WTC11 (cell line): ENCODE measurements at regions of chr20 and their contacts with region 1.

Region 1: DNA sequence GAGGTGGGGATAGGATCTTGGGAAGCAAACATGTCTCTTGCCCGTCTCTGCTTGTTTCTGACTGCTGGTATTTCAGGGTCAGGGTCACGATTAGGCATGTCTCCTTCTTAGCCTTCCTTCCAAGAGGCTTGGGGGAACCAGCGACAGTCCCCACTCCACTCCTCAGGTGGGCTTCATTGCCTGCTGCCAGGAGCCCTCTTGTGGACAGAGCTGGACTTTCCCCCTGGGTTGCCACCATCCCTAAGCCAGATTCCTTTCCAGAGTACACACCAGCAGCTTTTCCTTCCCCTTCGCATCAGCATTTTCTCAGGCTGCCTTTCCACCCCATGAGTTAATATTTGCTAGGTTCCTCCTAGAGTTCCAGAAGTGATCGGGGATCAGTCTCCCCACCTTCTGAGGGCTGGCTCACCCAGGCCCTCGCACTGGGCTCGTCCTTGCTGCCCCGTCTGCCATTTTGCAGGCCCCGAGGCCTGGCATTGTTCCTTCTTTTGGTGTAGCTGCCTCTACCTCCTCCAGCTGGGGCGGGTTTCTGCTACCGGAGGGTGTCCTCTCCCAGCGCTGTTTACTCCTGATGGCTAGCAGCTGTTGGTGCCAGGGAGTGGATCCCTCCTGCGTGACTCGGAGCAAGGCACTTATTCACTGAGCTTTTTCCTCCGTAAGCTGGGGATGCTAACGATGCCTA is 8.8 kb upstream of the C20orf144 start:
- DNase-seq: peak; percentile 82
- ATAC-seq: peak; percentile 85
- H3K4me3 Mint-ChIP-seq: no peak overlapping the region
- H3K27ac Mint-ChIP-seq: peak overlapping the region; percentile 48; the same call in 1 of the 2 replicates
- H3K4me1 Mint-ChIP-seq: peaks cover 31% of the 10 kb centered on the region
- H3K27me3 Mint-ChIP-seq: no peaks in the 10 kb centered on the region
- CTCF ChIP-seq: peak; percentile 65

Region 2: DNA sequence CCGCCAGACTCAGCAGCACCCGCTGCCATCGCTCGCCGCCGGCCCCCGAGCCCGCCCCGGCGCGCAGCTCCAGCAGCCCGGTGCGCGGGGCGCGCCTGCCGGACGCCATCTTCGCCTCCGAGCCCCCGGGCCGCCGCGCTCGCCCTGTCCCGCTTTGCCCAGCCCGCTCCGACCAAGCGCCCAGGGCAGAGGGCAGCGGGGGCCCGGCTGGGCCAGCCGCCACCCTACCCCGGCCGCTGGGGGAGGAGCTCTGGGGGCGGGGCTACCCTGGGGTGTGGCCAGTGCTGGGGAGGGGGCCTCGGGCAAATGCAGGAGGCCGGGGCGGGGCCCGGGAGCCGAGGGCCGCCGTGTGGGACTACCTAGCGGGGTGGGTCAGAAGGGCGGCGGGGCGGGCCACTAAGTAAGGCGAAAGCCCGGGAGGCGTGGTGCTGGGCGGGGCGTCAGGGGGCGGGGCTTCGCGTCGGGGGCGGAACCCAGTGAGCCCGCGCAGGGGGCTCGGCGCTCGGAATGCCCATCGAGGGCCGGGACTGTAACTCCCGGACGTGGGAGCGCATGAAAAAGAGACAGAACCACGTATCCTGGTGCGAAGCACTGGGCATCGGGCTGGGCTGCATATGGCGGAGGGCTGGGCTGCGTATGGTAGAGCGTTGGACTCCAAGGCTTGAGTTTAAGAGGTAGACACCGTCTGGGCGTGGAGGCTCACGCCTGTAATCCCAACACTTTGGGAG is 209.7 kb before region 1 on chr20 and contains the start of gene SNTA1:
- CTCF ChIA-PET with region 1: interaction called, 27 read pairs
- POLR2A ChIA-PET with region 1: no interaction called
- DNase-seq: peak; percentile 97
- ATAC-seq: peak; percentile 94
- H3K4me3 Mint-ChIP-seq: peak within 1 kb of the TSS; percentile 86
- H3K27ac Mint-ChIP-seq: peak within 1 kb of the TSS; percentile 80
- H3K4me1 Mint-ChIP-seq: peaks cover 12% of the 10 kb centered on the region
- H3K27me3 Mint-ChIP-seq: peaks cover 42% of the 10 kb centered on the region
- CTCF ChIP-seq: no peak
- total RNA-seq, gene SNTA1: 5.3 to 6.3 TPM (median 6.2 TPM) in 3 replicates

Region 3: GRCh38 chr20:33450867-33451266 is 202.5 kb before region 1 on chr20:
- CTCF ChIA-PET with region 1: interaction called, 27 read pairs
- POLR2A ChIA-PET with region 1: no interaction called
- DNase-seq: no peak
- ATAC-seq: no peak
- H3K4me3 Mint-ChIP-seq: no peak overlapping the region
- H3K27ac Mint-ChIP-seq: no peak overlapping the region
- H3K4me1 Mint-ChIP-seq: no peaks in the 10 kb centered on the region
- H3K27me3 Mint-ChIP-seq: peaks cover 5% of the 10 kb centered on the region; the same call in 1 of the 2 replicates
- CTCF ChIP-seq: no peak

Region 4: DNA sequence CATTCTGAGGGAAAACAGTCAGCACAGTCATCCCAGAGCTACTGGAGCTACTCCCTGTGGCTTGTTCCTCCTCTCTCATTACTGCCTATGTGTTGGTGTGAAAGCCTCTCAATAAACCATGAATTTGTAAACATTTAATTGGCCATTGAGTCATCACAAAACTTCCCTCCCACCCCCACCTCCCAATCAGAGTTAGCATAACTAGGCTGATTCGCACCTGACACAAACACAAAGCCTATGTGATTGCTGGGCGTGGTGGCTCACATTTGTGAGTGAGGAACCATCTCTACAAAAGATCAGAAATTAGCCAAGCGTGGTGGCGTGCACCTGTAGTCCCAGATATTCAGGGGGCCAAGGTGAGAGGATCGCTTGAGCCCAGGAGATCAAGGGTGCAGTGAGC is 192.6 kb before region 1 on chr20:
- CTCF ChIA-PET with region 1: interaction called, 38 read pairs
- POLR2A ChIA-PET with region 1: no interaction called
- DNase-seq: no peak
- ATAC-seq: peak; percentile 38
- H3K4me3 Mint-ChIP-seq: no peak overlapping the region
- H3K27ac Mint-ChIP-seq: no peak overlapping the region
- H3K4me1 Mint-ChIP-seq: peaks cover 15% of the 10 kb centered on the region
- H3K27me3 Mint-ChIP-seq: peaks cover 38% of the 10 kb centered on the region
- CTCF ChIP-seq: no peak

Region 5: GRCh38 chr20:33489495-33490022 is 163.8 kb before region 1 on chr20:
- CTCF ChIA-PET with region 1: interaction called, 10 read pairs
- POLR2A ChIA-PET with region 1: no interaction called
- DNase-seq: peak; percentile 98
- ATAC-seq: peak; percentile 96
- H3K4me3 Mint-ChIP-seq: peak overlapping the region; percentile 61
- H3K27ac Mint-ChIP-seq: peak overlapping the region; percentile 76
- H3K4me1 Mint-ChIP-seq: peaks cover 9% of the 10 kb centered on the region
- H3K27me3 Mint-ChIP-seq: no peaks in the 10 kb centered on the region
- CTCF ChIP-seq: no peak

Region 6: DNA sequence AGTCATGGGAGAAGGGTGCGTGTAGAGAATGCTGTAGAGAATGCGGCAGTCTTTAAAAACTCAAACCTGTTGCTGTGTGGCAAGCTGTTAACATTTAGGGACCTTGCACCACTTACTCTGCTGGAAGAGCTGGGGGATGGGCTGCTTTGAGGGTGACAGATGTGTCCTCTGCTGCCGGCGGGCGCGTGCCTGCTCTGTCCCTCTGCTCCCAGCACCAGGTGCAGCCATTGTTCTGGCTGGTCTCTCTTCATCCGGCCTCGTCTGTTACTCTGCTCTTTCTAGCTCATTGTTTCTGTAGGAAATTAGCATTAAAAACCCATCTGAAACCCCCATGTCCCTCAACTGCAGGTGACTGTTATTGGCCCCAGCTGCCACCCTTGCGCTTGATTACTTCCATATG is 85.0 kb before region 1 on chr20:
- CTCF ChIA-PET with region 1: interaction called, 11 read pairs
- POLR2A ChIA-PET with region 1: no interaction called
- DNase-seq: peak; percentile 85
- ATAC-seq: peak; percentile 98
- H3K4me3 Mint-ChIP-seq: peak overlapping the region; percentile 53
- H3K27ac Mint-ChIP-seq: peak overlapping the region; percentile 65
- H3K4me1 Mint-ChIP-seq: peaks cover 53% of the 10 kb centered on the region
- H3K27me3 Mint-ChIP-seq: peaks cover 71% of the 10 kb centered on the region
- CTCF ChIP-seq: no peak

Region 7: GRCh38 chr20:33697129-33697528 is 43.8 kb after region 1 on chr20:
- CTCF ChIA-PET with region 1: no interaction called
- POLR2A ChIA-PET with region 1: no interaction called
- DNase-seq: no peak
- ATAC-seq: no peak
- H3K4me3 Mint-ChIP-seq: no peak overlapping the region
- H3K27ac Mint-ChIP-seq: no peak overlapping the region
- H3K4me1 Mint-ChIP-seq: peaks cover 14% of the 10 kb centered on the region
- H3K27me3 Mint-ChIP-seq: peaks cover 9% of the 10 kb centered on the region
- CTCF ChIP-seq: no peak

Region 8: DNA sequence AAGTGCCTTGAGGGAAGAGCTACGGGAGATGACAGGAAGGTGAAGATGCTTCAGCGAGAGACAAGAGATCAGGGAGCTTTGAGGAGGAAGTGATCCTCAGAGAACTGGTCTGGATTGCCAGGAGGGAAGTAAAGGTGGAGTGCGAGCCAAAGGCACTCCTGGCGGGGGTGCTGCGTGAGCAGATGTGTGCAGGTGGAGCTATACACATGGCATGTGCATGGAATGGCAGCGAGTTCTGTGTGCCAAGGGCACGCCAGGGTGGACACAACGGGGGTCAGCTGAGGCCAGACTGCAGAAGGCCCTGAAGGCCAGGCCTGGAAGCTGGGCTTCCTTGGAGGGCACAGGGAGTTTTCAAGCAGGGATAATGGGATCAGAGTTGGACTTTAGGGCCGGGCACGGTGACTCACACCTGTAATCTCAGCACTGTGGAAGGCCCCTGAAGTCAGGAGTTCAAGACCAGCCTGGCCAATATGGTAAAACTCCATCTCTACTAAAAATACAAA is 60.6 kb after region 1 on chr20:
- CTCF ChIA-PET with region 1: no interaction called
- POLR2A ChIA-PET with region 1: no interaction called
- DNase-seq: no peak
- ATAC-seq: no peak
- H3K4me3 Mint-ChIP-seq: no peak overlapping the region
- H3K27ac Mint-ChIP-seq: no peak overlapping the region
- H3K4me1 Mint-ChIP-seq: peaks cover 10% of the 10 kb centered on the region
- H3K27me3 Mint-ChIP-seq: no peaks in the 10 kb centered on the region; the same call in 1 of the 2 replicates
- CTCF ChIP-seq: no peak